Activated B cell treated with CpG ODN at 0.5 μM for 24 hours (primary cell): ENCODE measurements at regions of chr7 and their contacts with region 1.

Region 1: GRCh38 chr7:50397320-50397970 is 52.7 kb downstream of the FIGNL1 start:
- DNase-seq: no peak
- ATAC-seq: peak; percentile 36
- H3K4me3 Mint-ChIP-seq: peak overlapping the region; percentile 45
- H3K27ac Mint-ChIP-seq: peak overlapping the region; percentile 93
- H3K4me1 Mint-ChIP-seq: peaks cover 79% of the 10 kb centered on the region
- H3K27me3 Mint-ChIP-seq: no peaks in the 10 kb centered on the region
- CTCF ChIP-seq: no peak

Region 2: GRCh38 chr7:50379082-50379481 is 18.4 kb before region 1 on chr7:
- CTCF ChIA-PET with region 1: no interaction called
- POLR2A ChIA-PET with region 1: interaction called, 5 read pairs
- intact Hi-C with region 1: loop called (anchors 2 kb)
- DNase-seq: no peak
- ATAC-seq: no peak
- H3K4me3 Mint-ChIP-seq: no peak overlapping the region
- H3K27ac Mint-ChIP-seq: peak overlapping the region; percentile 71
- H3K4me1 Mint-ChIP-seq: peaks cover 84% of the 10 kb centered on the region
- H3K27me3 Mint-ChIP-seq: no peaks in the 10 kb centered on the region
- CTCF ChIP-seq: no peak

Region 3: DNA sequence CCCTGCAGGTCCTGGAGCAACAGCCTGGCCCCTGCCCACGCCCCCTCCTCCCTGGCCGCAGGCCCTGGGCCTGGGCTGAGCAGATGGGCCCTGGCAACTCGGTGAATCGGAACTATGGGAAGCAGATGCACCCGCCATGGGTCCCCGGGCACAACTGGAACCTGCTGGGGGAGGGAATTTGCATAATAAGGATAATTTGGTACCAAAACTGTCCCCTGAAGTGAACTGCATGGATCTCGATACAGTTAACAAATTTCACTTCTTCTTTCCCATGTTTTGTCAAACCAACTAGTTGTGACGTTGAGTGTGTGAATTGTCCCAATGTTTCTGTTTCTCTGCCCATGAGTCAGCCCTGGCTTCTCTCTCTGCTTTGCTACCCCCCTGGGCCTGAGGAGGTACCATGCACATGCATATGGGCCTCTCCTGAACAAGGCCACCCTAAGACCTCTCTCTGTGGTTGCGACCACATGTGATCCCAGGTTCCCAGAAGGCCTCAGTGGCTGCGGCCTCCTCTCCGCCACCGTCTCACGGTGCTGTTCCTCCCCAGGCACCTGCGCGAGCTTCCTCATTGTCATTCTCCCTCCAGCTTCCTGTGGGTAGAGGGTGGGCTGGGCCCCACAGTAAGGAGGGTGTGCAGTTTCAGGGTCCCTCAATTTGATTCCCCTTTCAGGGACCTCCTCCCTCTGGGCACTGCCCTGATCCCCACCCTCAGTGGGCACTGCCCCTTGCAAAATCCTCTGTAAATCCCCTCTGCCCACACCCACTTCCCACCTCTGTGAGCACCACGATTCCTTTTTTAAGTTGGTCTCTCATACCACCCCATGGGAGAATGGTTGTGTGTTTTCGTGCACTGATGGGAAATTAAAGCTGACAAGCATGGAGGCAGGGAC is 12.7 kb after region 1 on chr7:
- CTCF ChIA-PET with region 1: no interaction called
- POLR2A ChIA-PET with region 1: interaction called, 18 read pairs
- intact Hi-C with region 1: loop called (anchors 1 kb)
- DNase-seq: peak; percentile 58
- ATAC-seq: peak; percentile 70
- H3K4me3 Mint-ChIP-seq: peak overlapping the region; percentile 56
- H3K27ac Mint-ChIP-seq: peak overlapping the region; percentile 94
- H3K4me1 Mint-ChIP-seq: peaks cover 98% of the 10 kb centered on the region
- H3K27me3 Mint-ChIP-seq: no peaks in the 10 kb centered on the region
- CTCF ChIP-seq: no peak

Region 4: DNA sequence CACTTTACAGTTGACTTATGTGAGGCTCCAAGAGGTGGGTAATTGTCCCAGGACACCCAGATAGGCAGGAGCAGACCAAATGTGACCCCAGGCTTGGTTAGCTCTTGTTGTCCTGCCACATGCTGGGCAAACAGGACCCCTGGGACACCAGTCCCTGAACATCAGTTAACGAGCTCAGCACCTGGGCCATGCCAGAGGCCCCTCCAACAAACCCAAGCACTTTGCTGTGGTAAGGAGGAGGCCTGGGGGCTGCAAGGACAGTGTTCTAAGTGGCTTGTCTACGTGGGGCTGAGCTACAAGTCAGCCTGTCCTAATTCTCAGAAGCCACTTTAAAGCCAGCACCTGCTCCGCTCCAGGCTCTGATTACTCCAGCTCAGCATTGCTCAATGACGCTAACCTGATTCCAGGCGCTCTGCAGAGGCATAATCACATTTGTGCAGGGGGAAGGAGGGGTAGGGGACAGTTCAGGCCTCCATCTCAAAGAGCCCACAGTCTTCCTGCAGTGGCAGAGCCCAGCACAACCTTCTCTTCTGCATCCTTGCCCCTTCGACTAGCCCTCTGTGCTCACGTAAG is 110.5 kb after region 1 on chr7:
- CTCF ChIA-PET with region 1: no interaction called
- POLR2A ChIA-PET with region 1: no interaction called
- intact Hi-C with region 1: no loop called
- DNase-seq: no peak
- ATAC-seq: no peak
- H3K4me3 Mint-ChIP-seq: no peak overlapping the region
- H3K27ac Mint-ChIP-seq: no peak overlapping the region
- H3K4me1 Mint-ChIP-seq: no peaks in the 10 kb centered on the region
- H3K27me3 Mint-ChIP-seq: peaks cover 21% of the 10 kb centered on the region
- CTCF ChIP-seq: no peak